ENCODE measurements at regions of chr18 and their contacts with region 1.

Region 1: GRCh38 chr18:42028247-42028832 is 73.3 kb downstream of the PIK3C3 start:
- DNase-seq: peak in 6 of 9 donors; percentile 2 to 35 (median 16)
- ATAC-seq: peak; percentile 76
- H3K4me3 ChIP-seq: no peak overlapping the region
- H3K4me3 Mint-ChIP-seq: no peak overlapping the region
- H3K27ac ChIP-seq: no peak overlapping the region
- H3K27ac Mint-ChIP-seq: no peak overlapping the region
- H3K4me1 ChIP-seq: peaks cover 0 to 11% of the 10 kb centered on the region in 2 donors
- H3K4me1 Mint-ChIP-seq: peaks cover 0 to 26% (median 17%) of the 10 kb centered on the region in 7 donors
- H3K27me3 ChIP-seq: no peaks in the 10 kb centered on the region
- H3K27me3 Mint-ChIP-seq: no peaks in the 10 kb centered on the region

Region 2: GRCh38 chr18:41954827-41955613 is 73.3 kb before region 1 on chr18 and contains the start of gene PIK3C3:
- CTCF ChIA-PET with region 1: no interaction called
- POLR2A ChIA-PET with region 1: no interaction called
- intact Hi-C with region 1: loop called in 1 of 2 experiments (anchors 5 kb)
- DNase-seq: peak; percentile 90 to 97 (median 95)
- ATAC-seq: peak; percentile 96
- H3K4me3 ChIP-seq: peak within 1 kb of the TSS; percentile 80
- H3K4me3 Mint-ChIP-seq: peak within 1 kb of the TSS; percentile 96 to 100 (median 100)
- H3K27ac ChIP-seq: peak within 1 kb of the TSS; percentile 91
- H3K27ac Mint-ChIP-seq: peak within 1 kb of the TSS; percentile 97 to 100 (median 99)
- H3K4me1 ChIP-seq: peaks cover 28 to 31% of the 10 kb centered on the region in 2 donors
- H3K4me1 Mint-ChIP-seq: peaks cover 26 to 50% (median 42%) of the 10 kb centered on the region in 7 donors
- H3K27me3 ChIP-seq: no peaks in the 10 kb centered on the region
- H3K27me3 Mint-ChIP-seq: peaks cover 0 to 6% (median 0%) of the 10 kb centered on the region in 5 donors
- total RNA-seq, gene PIK3C3: 47.4 to 76.9 (median 59.7) TPM

Region 3: GRCh38 chr18:42038936-42039335 is 10.6 kb after region 1 on chr18:
- CTCF ChIA-PET with region 1: no interaction called
- POLR2A ChIA-PET with region 1: no interaction called
- intact Hi-C with region 1: loop called in 1 of 2 experiments (anchors 2 kb)
- DNase-seq: no peak
- ATAC-seq: no peak
- H3K4me3 ChIP-seq: no peak overlapping the region
- H3K4me3 Mint-ChIP-seq: no peak overlapping the region
- H3K27ac ChIP-seq: no peak overlapping the region
- H3K27ac Mint-ChIP-seq: peak overlapping the region in 1 of 9 donors; percentile 13
- H3K4me1 ChIP-seq: no peaks in the 10 kb centered on the region
- H3K4me1 Mint-ChIP-seq: peaks cover 0 to 8% (median 0%) of the 10 kb centered on the region in 7 donors
- H3K27me3 ChIP-seq: no peaks in the 10 kb centered on the region
- H3K27me3 Mint-ChIP-seq: no peaks in the 10 kb centered on the region

Region 4: GRCh38 chr18:42164556-42164955 is 136.2 kb after region 1 on chr18:
- CTCF ChIA-PET with region 1: no interaction called
- POLR2A ChIA-PET with region 1: no interaction called
- intact Hi-C with region 1: no loop called
- DNase-seq: no peak
- ATAC-seq: no peak
- H3K4me3 ChIP-seq: no peak overlapping the region
- H3K4me3 Mint-ChIP-seq: no peak overlapping the region
- H3K27ac ChIP-seq: no peak overlapping the region
- H3K27ac Mint-ChIP-seq: no peak overlapping the region
- H3K4me1 ChIP-seq: no peaks in the 10 kb centered on the region
- H3K4me1 Mint-ChIP-seq: no peaks in the 10 kb centered on the region
- H3K27me3 ChIP-seq: no peaks in the 10 kb centered on the region
- H3K27me3 Mint-ChIP-seq: no peaks in the 10 kb centered on the region